Naive thymus-derived CD4-positive, alpha-beta T cell (primary cell): ENCODE measurements at regions of chr7 and their contacts with region 1.

Region 1: GRCh38 chr7:30134611-30135545 is at the start of gene MTURN:
- DNase-seq: peak; percentile 80 to 91 (median 88)
- ATAC-seq: peak; percentile 89
- H3K4me3 ChIP-seq: peak within 1 kb of the TSS; percentile 86
- H3K4me3 Mint-ChIP-seq: peak within 1 kb of the TSS; percentile 87 to 95 (median 92)
- H3K27ac ChIP-seq: peak within 1 kb of the TSS; percentile 77
- H3K27ac Mint-ChIP-seq: peak within 1 kb of the TSS; percentile 65 to 95 (median 91)
- H3K4me1 ChIP-seq: peaks cover 0 to 8% of the 10 kb centered on the region in 2 donors
- H3K4me1 Mint-ChIP-seq: peaks cover 0 to 16% (median 6%) of the 10 kb centered on the region in 7 donors
- H3K27me3 ChIP-seq: no peaks in the 10 kb centered on the region
- H3K27me3 Mint-ChIP-seq: peaks cover 0 to 47% (median 0%) of the 10 kb centered on the region in 5 donors
- total RNA-seq, gene MTURN: 2.7 to 38.7 (median 20.2) TPM

Region 2: GRCh38 chr7:29866490-29866930 is 268.4 kb before region 1 on chr7:
- CTCF ChIA-PET with region 1: no interaction called
- POLR2A ChIA-PET with region 1: no interaction called
- intact Hi-C with region 1: no loop called
- DNase-seq: no peak
- ATAC-seq: no peak
- H3K4me3 ChIP-seq: no peak overlapping the region
- H3K4me3 Mint-ChIP-seq: no peak overlapping the region
- H3K27ac ChIP-seq: no peak overlapping the region
- H3K27ac Mint-ChIP-seq: peak overlapping the region in 1 of 9 donors; percentile 27
- H3K4me1 ChIP-seq: no peaks in the 10 kb centered on the region
- H3K4me1 Mint-ChIP-seq: peaks cover 0 to 3% (median 0%) of the 10 kb centered on the region in 7 donors
- H3K27me3 ChIP-seq: peaks cover 0 to 3% of the 10 kb centered on the region in 2 donors
- H3K27me3 Mint-ChIP-seq: peaks cover under 1 to 14% (median 11%) of the 10 kb centered on the region in 5 donors

Region 3: GRCh38 chr7:29988424-29989256 is 146.2 kb before region 1 on chr7:
- CTCF ChIA-PET with region 1: no interaction called
- POLR2A ChIA-PET with region 1: no interaction called
- intact Hi-C with region 1: no loop called
- DNase-seq: peak in 8 of 9 donors; percentile 2 to 36 (median 21)
- ATAC-seq: peak; percentile 62
- H3K4me3 ChIP-seq: peak overlapping the region; percentile 52
- H3K4me3 Mint-ChIP-seq: peak overlapping the region; percentile 68 to 85 (median 80)
- H3K27ac ChIP-seq: peak overlapping the region; percentile 54
- H3K27ac Mint-ChIP-seq: peak overlapping the region in 5 of 9 donors; percentile 3 to 72 (median 44)
- H3K4me1 ChIP-seq: no peaks in the 10 kb centered on the region
- H3K4me1 Mint-ChIP-seq: peaks cover 6 to 15% (median 7%) of the 10 kb centered on the region in 7 donors
- H3K27me3 ChIP-seq: peaks cover 0 to 7% of the 10 kb centered on the region in 2 donors
- H3K27me3 Mint-ChIP-seq: peaks cover 43 to 69% (median 57%) of the 10 kb centered on the region in 5 donors

Region 4: GRCh38 chr7:30026229-30027064 is 108.4 kb before region 1 on chr7 and contains the start of gene FKBP14:
- CTCF ChIA-PET with region 1: no interaction called
- POLR2A ChIA-PET with region 1: interaction called, 7 read pairs
- intact Hi-C with region 1: loop called (anchors 1 to 2 kb)
- DNase-seq: peak; percentile 70 to 93 (median 89)
- ATAC-seq: peak; percentile 91
- H3K4me3 ChIP-seq: peak within 1 kb of the TSS; percentile 79
- H3K4me3 Mint-ChIP-seq: peak within 1 kb of the TSS in 6 of 10 donors; percentile 85 to 98 (median 89)
- H3K27ac ChIP-seq: peak within 1 kb of the TSS; percentile 69
- H3K27ac Mint-ChIP-seq: peak within 1 kb of the TSS; percentile 74 to 94 (median 88)
- H3K4me1 ChIP-seq: peaks cover 6 to 20% of the 10 kb centered on the region in 2 donors
- H3K4me1 Mint-ChIP-seq: peaks cover 28 to 47% (median 40%) of the 10 kb centered on the region in 7 donors
- H3K27me3 ChIP-seq: no peaks in the 10 kb centered on the region
- H3K27me3 Mint-ChIP-seq: no peaks in the 10 kb centered on the region
- total RNA-seq, gene FKBP14: 4.0 to 6.5 (median 5.3) TPM

Region 5: DNA sequence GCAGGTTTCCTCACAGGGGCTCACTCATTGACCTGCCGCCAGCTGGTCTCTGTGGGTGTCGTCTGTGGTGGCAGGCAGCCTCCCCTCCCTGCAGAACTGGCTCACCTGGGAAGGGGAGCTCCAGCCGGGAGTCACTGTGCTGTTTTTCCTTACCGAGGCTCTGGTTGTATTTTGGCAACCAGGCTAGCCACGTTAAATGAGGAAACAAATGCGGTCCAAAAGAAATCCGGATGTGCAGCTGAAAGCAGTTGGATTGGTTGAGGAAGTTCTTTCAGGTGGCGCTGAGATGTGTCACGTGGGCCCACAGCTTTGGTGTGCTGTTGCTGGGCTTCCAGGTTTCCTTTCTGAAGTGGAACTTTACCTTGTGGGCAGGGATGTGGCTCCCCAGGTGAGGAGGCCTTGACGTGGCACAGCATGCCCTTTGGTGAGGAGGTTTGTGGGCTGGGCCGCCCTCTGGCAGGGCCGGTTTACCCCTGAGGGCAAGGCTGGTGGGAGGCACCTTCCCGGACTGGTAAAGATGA is 14.1 kb after region 1 on chr7:
- CTCF ChIA-PET with region 1: no interaction called
- POLR2A ChIA-PET with region 1: interaction called, 12 read pairs
- intact Hi-C with region 1: loop called (anchors 1 kb)
- DNase-seq: peak in 7 of 9 donors; percentile 53 to 71 (median 67)
- ATAC-seq: peak; percentile 83
- H3K4me3 ChIP-seq: peak overlapping the region; percentile 43
- H3K4me3 Mint-ChIP-seq: no peak overlapping the region
- H3K27ac ChIP-seq: peak overlapping the region; percentile 54
- H3K27ac Mint-ChIP-seq: peak overlapping the region in 3 of 9 donors; percentile 51 to 91 (median 75)
- H3K4me1 ChIP-seq: peaks cover 0 to 14% of the 10 kb centered on the region in 2 donors
- H3K4me1 Mint-ChIP-seq: peaks cover 0 to 12% (median 0%) of the 10 kb centered on the region in 7 donors
- H3K27me3 ChIP-seq: no peaks in the 10 kb centered on the region
- H3K27me3 Mint-ChIP-seq: no peaks in the 10 kb centered on the region

Region 6: DNA sequence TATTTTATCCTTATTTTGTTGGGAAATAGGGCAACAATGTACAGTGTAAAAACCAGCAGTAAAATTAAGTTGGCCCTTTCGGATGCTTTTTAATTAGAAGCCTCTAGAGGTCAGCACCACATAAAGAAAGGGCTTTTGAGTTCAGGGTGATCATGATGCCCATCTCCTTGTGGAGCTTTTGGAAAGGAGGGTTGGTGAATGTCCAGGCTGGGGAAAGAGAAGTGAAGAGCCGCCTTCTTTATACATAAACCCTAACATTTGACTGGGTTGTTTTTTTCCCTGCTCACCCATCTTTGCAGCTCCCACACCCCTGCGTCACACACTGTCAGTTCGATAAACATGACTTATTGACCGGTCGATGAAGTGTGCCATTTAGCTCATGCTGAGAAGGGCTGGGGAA is 29.7 kb after region 1 on chr7:
- CTCF ChIA-PET with region 1: no interaction called
- POLR2A ChIA-PET with region 1: interaction called, 7 read pairs
- intact Hi-C with region 1: loop called in 1 of 2 experiments (anchors 2 kb)
- DNase-seq: no peak
- ATAC-seq: peak; percentile 43
- H3K4me3 ChIP-seq: no peak overlapping the region
- H3K4me3 Mint-ChIP-seq: no peak overlapping the region
- H3K27ac ChIP-seq: no peak overlapping the region
- H3K27ac Mint-ChIP-seq: no peak overlapping the region
- H3K4me1 ChIP-seq: peaks cover 10 to 20% of the 10 kb centered on the region in 2 donors
- H3K4me1 Mint-ChIP-seq: peaks cover 25 to 44% (median 32%) of the 10 kb centered on the region in 7 donors
- H3K27me3 ChIP-seq: no peaks in the 10 kb centered on the region
- H3K27me3 Mint-ChIP-seq: peaks cover 0 to 3% (median 0%) of the 10 kb centered on the region in 5 donors

Region 7: GRCh38 chr7:30556840-30557239 is 422.0 kb after region 1 on chr7:
- CTCF ChIA-PET with region 1: no interaction called
- POLR2A ChIA-PET with region 1: interaction called, 16 read pairs
- intact Hi-C with region 1: no loop called
- DNase-seq: no peak
- ATAC-seq: no peak
- H3K4me3 ChIP-seq: no peak overlapping the region
- H3K4me3 Mint-ChIP-seq: no peak overlapping the region
- H3K27ac ChIP-seq: no peak overlapping the region
- H3K27ac Mint-ChIP-seq: no peak overlapping the region
- H3K4me1 ChIP-seq: no peaks in the 10 kb centered on the region
- H3K4me1 Mint-ChIP-seq: no peaks in the 10 kb centered on the region
- H3K27me3 ChIP-seq: no peaks in the 10 kb centered on the region
- H3K27me3 Mint-ChIP-seq: no peaks in the 10 kb centered on the region

Region 8: GRCh38 chr7:30727061-30727945 is 592.4 kb after region 1 on chr7:
- CTCF ChIA-PET with region 1: no interaction called
- POLR2A ChIA-PET with region 1: no interaction called
- intact Hi-C with region 1: loop called in 1 of 2 experiments (anchors 2 kb)
- DNase-seq: peak in 8 of 9 donors; percentile 30 to 86 (median 81)
- ATAC-seq: peak; percentile 93
- H3K4me3 ChIP-seq: peak overlapping the region; percentile 86
- H3K4me3 Mint-ChIP-seq: peak overlapping the region; percentile 76 to 91 (median 90)
- H3K27ac ChIP-seq: peak overlapping the region; percentile 67
- H3K27ac Mint-ChIP-seq: peak overlapping the region; percentile 86 to 96 (median 91)
- H3K4me1 ChIP-seq: peaks cover 24 to 52% of the 10 kb centered on the region in 2 donors
- H3K4me1 Mint-ChIP-seq: peaks cover 46 to 79% (median 77%) of the 10 kb centered on the region in 7 donors
- H3K27me3 ChIP-seq: no peaks in the 10 kb centered on the region
- H3K27me3 Mint-ChIP-seq: no peaks in the 10 kb centered on the region